AG04450 (cell line): ENCODE measurements at regions of chr19 and their contacts with region 1.

Region 1: GRCh38 chr19:40662921-40663694 is 27.3 kb downstream of the NUMBL start:
- DNase-seq: peak; percentile 79
- H3K4me3 ChIP-seq: peak overlapping the region; percentile 61
- H3K27ac ChIP-seq: peak overlapping the region; percentile 91
- H3K27me3 ChIP-seq: no peaks in the 10 kb centered on the region
- CTCF ChIP-seq: peak; percentile 86

Region 2: DNA sequence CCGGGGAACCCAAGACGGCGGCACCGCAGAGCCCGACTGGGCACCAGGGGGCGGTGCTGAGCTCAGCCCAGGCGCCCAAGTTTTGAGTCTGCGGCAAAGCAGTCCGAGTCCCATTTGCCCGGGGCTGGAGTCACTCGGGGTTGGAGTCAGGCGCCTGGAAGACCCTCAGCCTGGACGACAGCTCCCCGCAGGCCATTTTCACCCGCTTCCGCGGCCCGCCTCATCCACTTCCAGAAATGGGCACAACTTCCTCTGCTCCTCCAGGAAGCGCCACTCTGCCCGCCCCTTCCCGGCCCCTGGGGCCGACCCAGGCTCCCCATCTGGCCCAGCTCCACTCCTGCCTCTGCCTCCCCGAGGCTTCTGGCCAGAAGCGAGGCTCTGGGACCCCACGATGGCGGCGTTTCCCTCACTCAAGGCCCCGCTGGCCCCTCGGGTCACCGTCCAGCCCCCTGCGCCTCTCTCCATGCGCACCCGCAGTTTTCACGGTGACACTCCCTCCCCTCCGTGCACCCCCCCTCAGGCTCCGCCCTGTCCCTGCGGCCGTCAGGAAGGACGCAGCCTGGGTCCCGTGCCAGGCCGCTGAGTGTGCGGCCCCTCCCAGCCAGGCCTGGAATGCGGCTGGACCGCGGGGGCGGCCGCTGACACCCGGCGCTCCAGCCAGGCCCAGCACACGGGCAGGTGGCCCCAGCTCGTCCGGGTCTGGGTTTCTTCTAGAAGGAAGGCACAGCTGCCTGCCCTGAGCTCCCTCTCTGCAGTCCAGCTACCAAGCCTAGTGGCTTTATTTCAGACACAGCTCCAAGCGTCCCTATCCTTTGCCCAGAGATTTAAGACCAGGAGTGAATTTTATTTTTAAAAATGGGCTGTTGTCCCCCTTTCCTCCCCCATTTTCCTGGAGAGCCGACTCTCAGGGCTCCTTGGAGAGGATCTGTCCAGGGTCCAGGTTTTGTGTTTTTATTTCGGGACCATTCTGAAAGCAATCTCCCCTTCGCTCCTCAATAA is 242.0 kb before region 1 on chr19:
- CTCF ChIA-PET with region 1: no interaction called
- POLR2A ChIA-PET with region 1: no interaction called
- DNase-seq: peak; percentile 75
- H3K4me3 ChIP-seq: peak overlapping the region; percentile 71
- H3K27ac ChIP-seq: peak overlapping the region; percentile 95
- H3K27me3 ChIP-seq: no peaks in the 10 kb centered on the region
- CTCF ChIP-seq: peak; percentile 98

Region 3: DNA sequence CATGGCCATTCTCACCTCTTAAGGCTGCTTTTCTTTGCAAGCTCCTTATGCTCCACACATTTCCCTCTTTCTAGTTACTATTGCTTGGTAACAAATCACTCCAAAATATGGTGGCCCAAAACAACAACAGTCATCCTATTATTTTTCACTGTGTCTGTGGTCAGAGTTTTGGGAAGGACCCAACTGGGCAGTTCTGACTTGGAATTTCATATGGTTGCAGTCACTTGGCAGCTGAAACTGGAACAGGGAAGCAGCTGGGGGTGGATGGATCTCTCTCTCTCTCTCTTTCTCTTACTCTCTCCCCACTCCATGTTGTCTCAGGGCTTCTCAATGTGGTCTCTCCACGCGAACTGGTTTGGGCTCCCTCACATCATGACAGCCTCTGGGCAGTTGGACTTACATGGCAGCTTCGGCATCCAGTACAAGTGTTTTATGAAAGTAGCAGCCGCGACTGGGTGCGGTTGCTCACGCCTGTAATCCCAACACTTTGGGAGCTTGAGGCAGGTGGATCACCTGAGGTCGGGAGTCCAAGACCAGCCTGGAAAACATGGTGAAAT is 12.3 kb before region 1 on chr19:
- CTCF ChIA-PET with region 1: interaction called, 14 read pairs
- POLR2A ChIA-PET with region 1: interaction called, 38 read pairs
- DNase-seq: peak; percentile 36
- H3K4me3 ChIP-seq: no peak overlapping the region
- H3K27ac ChIP-seq: peak overlapping the region; percentile 47
- H3K27me3 ChIP-seq: no peaks in the 10 kb centered on the region
- CTCF ChIP-seq: no peak

Region 4: GRCh38 chr19:40716655-40717324 is 53.7 kb after region 1 on chr19 and contains the starts of genes COQ8B and ITPKC:
- CTCF ChIA-PET with region 1: no interaction called
- POLR2A ChIA-PET with region 1: interaction called, 10 read pairs
- DNase-seq: peak; percentile 91
- H3K4me3 ChIP-seq: peak within 1 kb of the TSS; percentile 89
- H3K27ac ChIP-seq: peak within 1 kb of the TSS; percentile 100
- H3K27me3 ChIP-seq: no peaks in the 10 kb centered on the region
- CTCF ChIP-seq: no peak
- polyA plus RNA-seq, gene COQ8B: 16.0 and 20.2 TPM in 2 replicates
- polyA plus RNA-seq, gene ITPKC: 8.9 and 11.6 TPM in 2 replicates

Region 5: GRCh38 chr19:40724855-40725254 is 61.7 kb after region 1 on chr19:
- CTCF ChIA-PET with region 1: interaction called, 10 read pairs
- POLR2A ChIA-PET with region 1: no interaction called
- DNase-seq: no peak
- H3K4me3 ChIP-seq: no peak overlapping the region
- H3K27ac ChIP-seq: no peak overlapping the region
- H3K27me3 ChIP-seq: no peaks in the 10 kb centered on the region
- CTCF ChIP-seq: no peak

Region 6: GRCh38 chr19:40777937-40778705 is 115.0 kb after region 1 on chr19 and contains the start of gene RAB4B:
- CTCF ChIA-PET with region 1: interaction called, 4 read pairs
- POLR2A ChIA-PET with region 1: interaction called, 14 read pairs
- DNase-seq: peak; percentile 100
- H3K4me3 ChIP-seq: peak within 1 kb of the TSS; percentile 75
- H3K27ac ChIP-seq: peak within 1 kb of the TSS; percentile 96
- H3K27me3 ChIP-seq: no peaks in the 10 kb centered on the region
- CTCF ChIP-seq: no peak
- polyA plus RNA-seq, gene RAB4B: 14.0 and 16.2 TPM in 2 replicates

Region 7: DNA sequence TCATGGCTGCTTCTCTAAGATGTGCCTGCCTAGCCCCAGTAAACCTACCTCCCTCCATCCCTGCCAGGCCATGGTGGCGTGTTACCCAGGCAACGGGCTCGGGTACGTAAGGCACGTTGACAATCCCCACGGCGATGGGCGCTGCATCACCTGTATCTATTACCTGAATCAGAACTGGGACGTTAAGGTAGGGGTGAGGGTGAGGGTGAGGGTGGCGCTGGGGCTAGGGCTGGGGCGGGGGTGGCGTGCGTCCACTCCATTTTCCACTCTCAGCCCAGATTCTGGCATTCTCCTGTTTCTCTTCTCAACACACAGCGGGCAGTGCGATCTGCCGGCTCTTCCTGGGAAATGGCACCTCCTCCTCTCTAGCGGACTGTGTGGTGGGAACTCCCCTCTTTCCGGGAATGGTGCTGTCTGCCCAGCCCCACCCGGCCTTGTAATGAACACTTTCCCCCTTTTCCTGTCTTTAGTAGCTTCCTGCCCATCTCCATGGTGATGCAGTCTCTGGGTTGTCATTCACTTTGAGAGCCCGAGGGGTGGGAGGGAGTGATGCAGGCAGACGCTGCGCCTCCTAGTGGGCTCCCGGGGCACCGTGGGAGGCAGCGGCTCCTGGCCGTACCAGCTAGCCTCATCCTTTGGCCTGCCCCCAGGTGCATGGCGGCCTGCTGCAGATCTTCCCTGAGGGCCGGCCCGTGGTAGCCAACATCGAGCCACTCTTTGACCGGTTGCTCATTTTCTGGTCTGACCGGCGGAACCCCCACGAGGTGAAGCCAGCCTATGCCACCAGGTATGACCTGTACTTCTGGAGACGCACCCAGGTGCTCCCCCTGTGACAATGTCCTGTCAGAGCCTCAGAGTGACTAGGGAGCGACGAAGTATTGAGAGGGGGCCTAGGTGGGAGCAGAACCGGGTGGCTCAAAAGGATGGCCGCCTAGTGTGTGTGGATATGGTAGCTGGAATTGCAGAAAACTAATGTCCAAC is 143.7 kb after region 1 on chr19:
- CTCF ChIA-PET with region 1: interaction called, 15 read pairs
- POLR2A ChIA-PET with region 1: interaction called, 8 read pairs
- DNase-seq: peak; percentile 77
- H3K4me3 ChIP-seq: peak overlapping the region; percentile 35
- H3K27ac ChIP-seq: peak overlapping the region; percentile 39
- H3K27me3 ChIP-seq: no peaks in the 10 kb centered on the region
- CTCF ChIP-seq: peak; percentile 94

Region 8: GRCh38 chr19:40822161-40822560 is 159.1 kb after region 1 on chr19:
- CTCF ChIA-PET with region 1: interaction called, 14 read pairs
- POLR2A ChIA-PET with region 1: interaction called, 4 read pairs
- DNase-seq: no peak
- H3K4me3 ChIP-seq: no peak overlapping the region
- H3K27ac ChIP-seq: no peak overlapping the region
- H3K27me3 ChIP-seq: no peaks in the 10 kb centered on the region
- CTCF ChIP-seq: no peak